ENCODE measurements at regions of chr14 and their contacts with region 1.

Region 1: GRCh38 chr14:67951529-67952135 is 132.1 kb downstream of the RAD51B start:
- DNase-seq: no peak
- ATAC-seq: no peak
- H3K4me3 Mint-ChIP-seq: no peak overlapping the region
- H3K27ac Mint-ChIP-seq: no peak overlapping the region
- H3K4me1 Mint-ChIP-seq: no peaks in the 10 kb centered on the region
- H3K27me3 Mint-ChIP-seq: no peaks in the 10 kb centered on the region
- CTCF ChIP-seq: no peak

Region 2: GRCh38 chr14:68124979-68125731 is 173.5 kb after region 1 on chr14:
- CTCF ChIA-PET with region 1: no interaction called
- POLR2A ChIA-PET with region 1: no interaction called
- intact Hi-C with region 1: no loop called
- DNase-seq: no peak
- ATAC-seq: no peak
- H3K4me3 Mint-ChIP-seq: no peak overlapping the region
- H3K27ac Mint-ChIP-seq: no peak overlapping the region
- H3K4me1 Mint-ChIP-seq: no peaks in the 10 kb centered on the region
- H3K27me3 Mint-ChIP-seq: no peaks in the 10 kb centered on the region
- CTCF ChIP-seq: no peak

Region 3: DNA sequence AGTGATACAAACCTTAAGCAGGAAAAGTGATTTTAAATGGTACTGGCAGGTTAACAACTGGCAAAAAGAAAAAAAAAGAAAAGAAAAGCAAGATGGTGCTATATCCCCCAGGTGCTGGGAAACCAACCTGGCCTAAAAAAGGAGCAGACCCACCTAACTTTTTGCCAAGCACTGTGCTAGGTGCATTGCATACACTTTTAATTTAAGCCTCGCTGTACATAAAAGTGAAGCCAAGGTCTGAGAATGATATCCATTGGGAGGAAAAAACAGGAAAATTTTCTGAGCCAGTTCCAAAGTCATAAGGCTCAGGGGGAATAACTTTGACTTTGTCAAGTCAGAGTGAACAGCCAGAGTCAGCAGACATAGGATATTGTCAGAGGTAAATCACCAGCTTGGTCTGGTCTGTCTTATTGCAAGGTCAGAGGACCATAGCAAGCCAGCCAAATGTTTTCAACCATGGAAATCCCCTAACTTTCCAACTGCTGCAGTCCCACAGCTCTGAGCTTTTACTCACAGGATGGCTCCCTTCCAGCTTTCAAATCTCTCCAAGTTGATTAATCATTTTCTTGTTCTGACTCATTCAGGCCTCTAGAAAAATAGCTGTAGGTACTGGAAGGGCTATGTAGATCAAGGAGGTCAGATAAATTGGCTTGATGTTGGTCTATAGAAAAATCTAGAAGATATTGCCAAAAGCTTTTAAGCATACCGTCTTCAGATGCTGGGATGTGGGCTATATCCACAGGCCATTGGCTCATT is 280.8 kb after region 1 on chr14:
- CTCF ChIA-PET with region 1: no interaction called
- POLR2A ChIA-PET with region 1: no interaction called
- intact Hi-C with region 1: loop called (anchors 5 kb)
- DNase-seq: no peak
- ATAC-seq: peak; percentile 91
- H3K4me3 Mint-ChIP-seq: no peak overlapping the region
- H3K27ac Mint-ChIP-seq: no peak overlapping the region
- H3K4me1 Mint-ChIP-seq: peaks cover 2% of the 10 kb centered on the region
- H3K27me3 Mint-ChIP-seq: no peaks in the 10 kb centered on the region
- CTCF ChIP-seq: no peak

Region 4: DNA sequence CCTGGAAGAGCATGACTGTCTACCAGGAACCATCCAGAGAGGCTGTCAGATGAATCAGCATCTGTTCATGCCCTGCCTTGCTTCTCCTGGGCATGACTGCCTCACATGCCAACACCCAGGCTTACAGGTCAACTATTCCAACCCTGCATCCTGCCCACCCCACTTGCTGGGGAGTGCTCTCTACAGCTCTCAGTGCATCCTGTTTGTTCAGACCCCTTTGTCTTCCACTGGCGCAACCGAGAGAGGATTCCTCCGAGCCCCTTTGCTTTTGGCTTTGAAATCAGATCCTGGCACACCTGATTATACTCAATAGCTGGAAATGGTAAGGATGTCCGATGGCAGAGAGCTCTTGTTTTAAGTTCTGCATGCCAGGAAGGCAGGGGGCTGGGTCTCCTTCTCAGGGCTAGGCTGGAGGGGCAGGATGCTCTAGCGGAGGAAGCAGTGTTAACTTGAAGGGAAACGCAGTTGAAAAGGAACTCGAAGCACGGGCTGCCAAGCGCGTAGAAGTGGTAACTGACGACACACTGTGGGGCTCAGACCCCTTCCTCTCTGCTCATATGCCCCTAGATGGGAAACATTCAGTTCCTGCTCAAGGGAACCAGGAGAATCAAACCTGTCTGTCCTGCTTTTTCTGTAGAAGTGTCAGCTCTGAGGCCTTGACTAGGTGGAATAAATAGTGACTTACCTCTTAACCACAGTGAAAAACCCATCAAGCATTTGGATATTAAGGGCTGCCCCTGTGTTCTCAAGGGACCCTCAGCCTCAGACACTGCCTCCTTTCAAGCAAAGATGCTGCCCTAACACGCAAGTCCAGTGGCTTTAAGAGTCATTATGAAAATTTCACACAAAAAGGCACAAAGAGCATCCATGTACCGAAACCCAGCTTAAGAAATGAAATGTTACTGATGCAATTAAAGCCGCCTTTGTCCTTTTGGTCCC is 543.7 kb after region 1 on chr14:
- CTCF ChIA-PET with region 1: no interaction called
- POLR2A ChIA-PET with region 1: no interaction called
- intact Hi-C with region 1: no loop called
- DNase-seq: no peak
- ATAC-seq: peak; percentile 92
- H3K4me3 Mint-ChIP-seq: peak overlapping the region; percentile 64
- H3K27ac Mint-ChIP-seq: peak overlapping the region; percentile 98
- H3K4me1 Mint-ChIP-seq: peaks cover 84% of the 10 kb centered on the region
- H3K27me3 Mint-ChIP-seq: no peaks in the 10 kb centered on the region
- CTCF ChIP-seq: no peak

Measured in activated B cell treated with CpG ODN at 0.5 μM for 24 hours (primary cell).